Dorsolateral prefrontal cortex (tissue), 120 donors: ENCODE measurements at regions of chr10 and their contacts with region 1.

Region 1: GRCh38 chr10:119596537-119597404 is at the start of gene TIAL1:
- DNase-seq: peak; percentile 97 to 99 (median 99)
- H3K4me3 ChIP-seq: peak within 1 kb of the TSS; percentile 64 to 100 (median 91)
- H3K27ac ChIP-seq: peak within 1 kb of the TSS; percentile 93 to 100 (median 99)
- H3K27me3 ChIP-seq: no peaks in the 10 kb centered on the region
- CTCF ChIP-seq: peak in 34 of 56 donors; percentile 8 to 52 (median 26)
- total RNA-seq, gene TIAL1: 76.2 to 149 (median 107) TPM

Region 2: DNA sequence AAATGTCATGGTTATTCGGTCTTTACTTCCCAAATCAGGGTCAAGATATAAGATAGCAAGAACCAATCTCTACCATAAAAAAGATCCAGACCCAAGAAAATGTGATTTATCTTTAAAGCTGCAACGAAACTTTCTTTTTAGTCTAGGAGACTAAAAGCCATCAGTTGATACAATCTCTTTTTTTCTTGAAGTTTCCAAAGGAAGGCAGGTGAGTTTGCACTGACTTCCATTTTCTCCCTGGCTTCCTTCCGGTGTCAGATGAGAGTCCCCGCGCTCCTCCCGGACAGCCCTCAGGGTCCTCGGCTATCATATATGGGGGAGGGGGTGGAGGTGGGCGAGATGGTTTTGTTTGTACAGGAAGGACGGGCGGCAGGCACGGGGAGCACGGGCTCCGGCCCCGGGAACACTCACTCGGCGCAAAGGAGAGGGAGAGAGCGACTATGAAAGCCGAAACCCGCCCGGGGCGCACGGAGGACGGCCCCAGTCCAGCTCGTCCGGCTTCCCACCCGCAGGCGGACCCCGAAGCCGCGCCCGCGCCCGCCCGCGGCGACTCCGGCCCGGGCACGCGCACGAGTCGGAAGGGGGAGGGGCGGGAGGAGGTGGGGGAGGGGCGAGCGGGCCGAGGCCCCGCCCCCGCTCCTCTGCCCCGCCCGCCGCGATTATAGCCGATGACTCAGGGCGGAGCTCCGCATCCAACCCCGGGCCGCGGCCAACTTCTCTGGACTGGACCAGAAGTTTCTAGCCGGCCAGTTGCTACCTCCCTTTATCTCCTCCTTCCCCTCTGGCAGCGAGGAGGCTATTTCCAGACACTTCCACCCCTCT is 54.1 kb after region 1 on chr10 and contains the start of gene BAG3:
- intact Hi-C with region 1: loop called (anchors 1 to 2 kb)
- DNase-seq: peak; percentile 72 to 90 (median 86)
- H3K4me3 ChIP-seq: peak within 1 kb of the TSS; percentile 61 to 92 (median 82)
- H3K27ac ChIP-seq: peak within 1 kb of the TSS; percentile 23 to 99 (median 93)
- H3K27me3 ChIP-seq: peaks cover 0 to 9% (median 0%) of the 10 kb centered on the region in 45 donors
- CTCF ChIP-seq: peak in 8 of 56 donors; percentile 11 to 24 (median 18)
- total RNA-seq, gene BAG3: 13.1 to 274 (median 32.3) TPM

Region 3: GRCh38 chr10:119872860-119873681 is 276.3 kb after region 1 on chr10:
- intact Hi-C with region 1: loop called (anchors 2 to 5 kb)
- DNase-seq: peak; percentile 66 to 93 (median 84)
- H3K4me3 ChIP-seq: peak overlapping the region; percentile 58 to 95 (median 84)
- H3K27ac ChIP-seq: peak overlapping the region; percentile 43 to 97 (median 91)
- H3K27me3 ChIP-seq: no peaks in the 10 kb centered on the region
- CTCF ChIP-seq: peak in 36 of 56 donors; percentile 1 to 60 (median 28)

Region 4: DNA sequence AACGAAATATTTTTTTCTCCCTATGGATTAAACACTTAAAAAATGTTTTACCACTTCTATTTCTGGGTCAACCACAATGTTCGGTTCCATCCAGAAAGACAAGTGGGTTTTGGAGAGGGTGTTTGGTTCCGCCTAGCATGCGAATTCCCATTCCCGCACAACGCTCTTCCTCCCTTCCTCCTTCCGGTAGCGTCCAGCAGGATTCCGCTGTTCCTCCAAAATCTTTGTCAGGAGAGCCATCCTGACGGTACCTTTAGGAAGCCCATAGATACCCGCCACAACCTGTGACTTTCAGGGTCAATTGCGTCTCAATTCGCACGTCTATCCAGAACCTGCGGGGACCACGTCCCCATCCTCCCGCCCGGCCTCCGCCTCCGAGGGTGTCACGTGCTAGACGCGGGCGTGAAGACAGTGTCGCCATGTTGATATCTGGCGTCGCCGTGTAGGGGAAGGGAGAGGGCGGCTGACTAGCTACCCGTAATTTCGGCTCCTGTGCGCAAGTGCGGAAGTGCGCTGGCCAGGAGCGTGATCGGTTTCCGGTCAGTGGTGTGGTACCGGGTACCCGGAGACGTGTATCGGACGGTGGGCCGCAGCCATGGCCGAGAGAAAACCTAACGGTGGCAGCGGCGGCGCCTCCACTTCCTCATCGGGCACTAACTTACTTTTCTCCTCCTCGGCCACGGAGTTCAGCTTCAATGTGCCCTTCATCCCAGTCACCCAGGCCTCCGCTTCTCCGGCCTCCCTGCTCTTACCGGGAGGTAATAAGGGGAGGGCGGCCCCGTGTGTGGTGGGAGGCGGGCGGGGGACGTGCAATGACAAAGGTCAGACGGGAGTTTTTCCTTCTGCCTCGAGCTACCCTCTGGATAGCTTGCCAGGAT is 295.7 kb after region 1 on chr10 and contains the start of gene SEC23IP:
- intact Hi-C with region 1: loop called (anchors 1 to 2 kb)
- DNase-seq: peak; percentile 98 to 100 (median 99)
- H3K4me3 ChIP-seq: peak within 1 kb of the TSS; percentile 64 to 100 (median 97)
- H3K27ac ChIP-seq: peak within 1 kb of the TSS; percentile 43 to 98 (median 90)
- H3K27me3 ChIP-seq: no peaks in the 10 kb centered on the region
- CTCF ChIP-seq: peak in 37 of 56 donors; percentile 1 to 59 (median 31)
- total RNA-seq, gene SEC23IP: 19.3 to 61.5 (median 35.0) TPM